ENCODE measurements at regions of chr7 and their contacts with region 1.

Region 1: GRCh38 chr7:148262721-148263229 is 327.8 kb upstream of the C7orf33 start:
- DNase-seq: peak; percentile 15 to 63 (median 44)
- ATAC-seq: peak; percentile 85
- H3K4me3 ChIP-seq: no peak overlapping the region
- H3K4me3 Mint-ChIP-seq: peak overlapping the region; percentile 13 to 75 (median 60)
- H3K27ac ChIP-seq: no peak overlapping the region
- H3K27ac Mint-ChIP-seq: no peak overlapping the region
- H3K4me1 ChIP-seq: peaks cover 0 to 5% of the 10 kb centered on the region in 2 donors
- H3K4me1 Mint-ChIP-seq: peaks cover 8 to 15% (median 9%) of the 10 kb centered on the region in 7 donors
- H3K27me3 ChIP-seq: no peaks in the 10 kb centered on the region
- H3K27me3 Mint-ChIP-seq: peaks cover 0 to 16% (median 7%) of the 10 kb centered on the region in 5 donors

Region 2: DNA sequence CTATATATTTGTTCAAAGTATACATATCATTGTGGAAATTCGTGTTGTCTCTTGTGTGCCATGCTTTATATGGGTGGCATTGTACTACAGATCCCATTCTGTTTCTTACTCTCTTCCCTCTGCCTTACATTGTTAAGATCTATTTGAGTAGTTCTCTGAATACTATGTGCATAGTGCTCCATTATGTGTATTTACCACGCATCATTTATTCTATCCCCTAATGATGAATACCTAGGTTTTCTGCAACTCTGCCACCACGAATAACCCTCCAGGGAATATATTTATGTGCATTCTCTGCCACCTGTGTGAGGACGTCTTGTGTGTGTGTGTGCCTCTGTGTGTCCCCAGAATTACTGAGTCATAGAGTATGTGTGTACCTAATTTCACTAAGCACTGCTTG is 103.4 kb before region 1 on chr7:
- CTCF ChIA-PET with region 1: no interaction called
- POLR2A ChIA-PET with region 1: no interaction called
- intact Hi-C with region 1: no loop called
- DNase-seq: no peak
- ATAC-seq: no peak
- H3K4me3 ChIP-seq: no peak overlapping the region
- H3K4me3 Mint-ChIP-seq: no peak overlapping the region
- H3K27ac ChIP-seq: no peak overlapping the region
- H3K27ac Mint-ChIP-seq: no peak overlapping the region
- H3K4me1 ChIP-seq: no peaks in the 10 kb centered on the region
- H3K4me1 Mint-ChIP-seq: no peaks in the 10 kb centered on the region
- H3K27me3 ChIP-seq: peaks cover 0 to 2% of the 10 kb centered on the region in 2 donors
- H3K27me3 Mint-ChIP-seq: peaks cover 0 to 15% (median 6%) of the 10 kb centered on the region in 5 donors

Region 3: GRCh38 chr7:148485618-148486017 is 222.8 kb after region 1 on chr7:
- CTCF ChIA-PET with region 1: interaction called, 3 read pairs
- POLR2A ChIA-PET with region 1: no interaction called
- intact Hi-C with region 1: loop called in 1 of 2 experiments (anchors 2 kb)
- DNase-seq: no peak
- ATAC-seq: no peak
- H3K4me3 ChIP-seq: no peak overlapping the region
- H3K4me3 Mint-ChIP-seq: no peak overlapping the region
- H3K27ac ChIP-seq: no peak overlapping the region
- H3K27ac Mint-ChIP-seq: no peak overlapping the region
- H3K4me1 ChIP-seq: no peaks in the 10 kb centered on the region
- H3K4me1 Mint-ChIP-seq: peaks cover 0 to 6% (median 0%) of the 10 kb centered on the region in 7 donors
- H3K27me3 ChIP-seq: no peaks in the 10 kb centered on the region
- H3K27me3 Mint-ChIP-seq: peaks cover 4 to 11% (median 5%) of the 10 kb centered on the region in 5 donors

Region 4: GRCh38 chr7:148527707-148528168 is 265.0 kb after region 1 on chr7:
- CTCF ChIA-PET with region 1: no interaction called
- POLR2A ChIA-PET with region 1: no interaction called
- intact Hi-C with region 1: loop called (anchors 1 to 10 kb)
- DNase-seq: peak; percentile 63 to 81 (median 77)
- ATAC-seq: peak; percentile 100
- H3K4me3 ChIP-seq: no peak overlapping the region
- H3K4me3 Mint-ChIP-seq: no peak overlapping the region
- H3K27ac ChIP-seq: no peak overlapping the region
- H3K27ac Mint-ChIP-seq: no peak overlapping the region
- H3K4me1 ChIP-seq: no peaks in the 10 kb centered on the region
- H3K4me1 Mint-ChIP-seq: peaks cover 0 to 5% (median 0%) of the 10 kb centered on the region in 7 donors
- H3K27me3 ChIP-seq: no peaks in the 10 kb centered on the region
- H3K27me3 Mint-ChIP-seq: peaks cover 17 to 45% (median 30%) of the 10 kb centered on the region in 5 donors

Region 5: GRCh38 chr7:149209518-149210269 is 946.9 kb after region 1 on chr7:
- CTCF ChIA-PET with region 1: no interaction called
- POLR2A ChIA-PET with region 1: no interaction called
- intact Hi-C with region 1: no loop called
- DNase-seq: peak; percentile 18 to 74 (median 48)
- ATAC-seq: peak; percentile 73
- H3K4me3 ChIP-seq: no peak overlapping the region
- H3K4me3 Mint-ChIP-seq: peak overlapping the region in 1 of 10 donors; percentile 60
- H3K27ac ChIP-seq: no peak overlapping the region
- H3K27ac Mint-ChIP-seq: peak overlapping the region in 3 of 9 donors; percentile 6 to 79 (median 72)
- H3K4me1 ChIP-seq: no peaks in the 10 kb centered on the region
- H3K4me1 Mint-ChIP-seq: peaks cover 0 to 21% (median 5%) of the 10 kb centered on the region in 7 donors
- H3K27me3 ChIP-seq: no peaks in the 10 kb centered on the region
- H3K27me3 Mint-ChIP-seq: no peaks in the 10 kb centered on the region

Measured in naive thymus-derived CD4-positive, alpha-beta T cell (primary cell).